PC-9 (cell line): ENCODE measurements at regions of chr9 and their contacts with region 1.

Region 1: GRCh38 chr9:128809832-128810231 is 8.5 kb upstream of the ENDOG start:
- DNase-seq: no peak
- H3K4me3 ChIP-seq: no peak overlapping the region
- H3K27ac ChIP-seq: no peak overlapping the region
- H3K4me1 ChIP-seq: no peaks in the 10 kb centered on the region
- H3K27me3 ChIP-seq: no peaks in the 10 kb centered on the region
- CTCF ChIP-seq: no peak

Region 2: DNA sequence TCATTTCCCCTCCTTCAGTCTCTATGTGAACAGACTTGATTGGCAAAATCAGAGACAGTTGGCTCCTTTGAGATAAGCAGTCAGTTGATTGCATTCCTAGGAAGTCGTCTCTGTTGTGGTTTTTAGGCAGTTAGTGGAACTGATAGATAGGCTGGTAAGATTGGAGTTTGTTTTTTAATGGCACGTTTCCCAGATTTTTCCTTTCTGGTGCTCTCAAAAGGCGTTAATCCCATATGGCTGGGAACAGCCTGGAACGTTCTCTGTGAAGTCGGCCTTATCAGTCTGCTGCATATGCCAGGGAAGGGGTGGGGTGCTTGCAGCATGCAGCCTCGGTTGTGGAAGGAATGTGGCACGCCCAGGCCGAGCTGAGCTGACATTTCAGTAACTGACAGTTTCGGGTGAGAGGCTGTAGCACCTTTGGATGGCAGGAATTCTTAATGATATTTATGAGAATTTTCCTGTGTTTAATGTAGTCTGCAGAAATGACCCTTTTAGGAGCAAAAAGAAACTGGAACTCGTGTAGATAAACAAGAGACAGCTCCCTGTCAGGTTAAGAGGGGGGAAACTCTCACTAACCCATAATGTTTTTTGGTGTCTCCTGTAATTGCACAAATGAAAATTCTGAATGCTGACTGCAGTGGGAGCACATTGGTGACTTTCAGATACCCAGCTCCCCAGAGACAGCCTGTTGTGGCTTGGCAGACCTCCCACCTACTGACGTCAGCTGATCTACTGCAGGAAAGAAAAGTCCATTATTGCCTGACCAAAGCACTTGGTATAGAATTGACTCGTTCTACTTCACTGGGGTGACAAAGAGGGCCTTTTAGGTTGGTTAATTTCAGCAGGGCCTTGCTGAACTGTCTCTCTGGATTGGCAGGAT is 251.2 kb before region 1 on chr9:
- CTCF ChIA-PET with region 1: no interaction called
- POLR2A ChIA-PET with region 1: interaction called, 15 read pairs
- intact Hi-C with region 1: no loop called
- DNase-seq: peak; percentile 78 to 79
- H3K4me3 ChIP-seq: no peak overlapping the region
- H3K27ac ChIP-seq: peak overlapping the region; percentile 61
- H3K4me1 ChIP-seq: peaks cover 57% of the 10 kb centered on the region
- H3K27me3 ChIP-seq: no peaks in the 10 kb centered on the region
- CTCF ChIP-seq: no peak

Region 3: GRCh38 chr9:128713941-128714573 is 95.8 kb before region 1 on chr9:
- CTCF ChIA-PET with region 1: no interaction called
- POLR2A ChIA-PET with region 1: no interaction called
- intact Hi-C with region 1: no loop called
- DNase-seq: no peak
- H3K4me3 ChIP-seq: no peak overlapping the region
- H3K27ac ChIP-seq: no peak overlapping the region
- H3K4me1 ChIP-seq: peaks cover 4% of the 10 kb centered on the region; the same call in 1 of the 2 replicates
- H3K27me3 ChIP-seq: no peaks in the 10 kb centered on the region
- CTCF ChIP-seq: no peak

Region 4: DNA sequence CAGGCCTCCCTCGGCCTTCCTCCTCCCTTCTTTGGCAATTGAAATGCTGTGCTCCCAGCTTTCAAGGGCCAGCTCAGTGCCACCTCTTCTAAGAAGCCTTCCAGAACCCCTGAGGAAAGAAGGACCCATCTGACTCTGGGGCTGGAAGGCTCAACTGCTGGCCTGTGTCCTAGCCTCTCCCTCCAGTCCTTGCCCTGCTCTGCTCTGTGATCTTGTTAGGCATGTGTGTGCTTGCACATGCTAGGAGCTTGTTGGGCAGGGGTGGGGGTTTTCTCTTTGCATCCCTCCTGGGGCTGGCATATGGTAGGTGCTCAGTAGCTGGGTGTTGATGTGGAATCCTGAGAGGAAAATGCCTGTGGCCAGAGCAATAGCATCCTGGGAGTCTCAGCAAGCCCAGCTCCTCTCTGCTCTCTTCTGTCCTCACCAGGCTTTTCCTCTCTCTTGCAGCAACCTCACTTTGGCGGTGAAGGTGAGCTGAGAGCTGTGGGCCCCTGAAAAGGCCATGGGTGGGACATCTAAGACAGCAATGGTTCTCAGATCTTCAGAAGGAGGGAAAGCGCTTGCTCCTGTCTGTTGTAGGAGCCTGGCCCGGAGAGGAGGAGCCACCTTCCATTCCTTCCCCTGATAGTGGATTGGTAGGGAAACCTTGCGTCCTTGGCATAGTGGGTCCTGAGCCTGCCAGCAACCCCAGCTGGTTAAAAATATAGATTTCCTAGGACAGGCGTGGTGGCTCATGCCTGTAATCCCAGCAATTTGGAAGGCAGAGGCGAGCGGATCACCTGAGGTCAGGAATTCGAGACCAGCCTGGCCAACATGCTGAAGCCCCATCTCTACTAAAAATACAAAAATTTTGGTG is 127.7 kb after region 1 on chr9:
- CTCF ChIA-PET with region 1: no interaction called
- POLR2A ChIA-PET with region 1: no interaction called
- intact Hi-C with region 1: no loop called
- DNase-seq: no peak
- H3K4me3 ChIP-seq: no peak overlapping the region
- H3K27ac ChIP-seq: no peak overlapping the region
- H3K4me1 ChIP-seq: no peaks in the 10 kb centered on the region
- H3K27me3 ChIP-seq: no peaks in the 10 kb centered on the region
- CTCF ChIP-seq: no peak